AG04449 (cell line): ENCODE measurements at regions of chr19 and their contacts with region 1.

Region 1: DNA sequence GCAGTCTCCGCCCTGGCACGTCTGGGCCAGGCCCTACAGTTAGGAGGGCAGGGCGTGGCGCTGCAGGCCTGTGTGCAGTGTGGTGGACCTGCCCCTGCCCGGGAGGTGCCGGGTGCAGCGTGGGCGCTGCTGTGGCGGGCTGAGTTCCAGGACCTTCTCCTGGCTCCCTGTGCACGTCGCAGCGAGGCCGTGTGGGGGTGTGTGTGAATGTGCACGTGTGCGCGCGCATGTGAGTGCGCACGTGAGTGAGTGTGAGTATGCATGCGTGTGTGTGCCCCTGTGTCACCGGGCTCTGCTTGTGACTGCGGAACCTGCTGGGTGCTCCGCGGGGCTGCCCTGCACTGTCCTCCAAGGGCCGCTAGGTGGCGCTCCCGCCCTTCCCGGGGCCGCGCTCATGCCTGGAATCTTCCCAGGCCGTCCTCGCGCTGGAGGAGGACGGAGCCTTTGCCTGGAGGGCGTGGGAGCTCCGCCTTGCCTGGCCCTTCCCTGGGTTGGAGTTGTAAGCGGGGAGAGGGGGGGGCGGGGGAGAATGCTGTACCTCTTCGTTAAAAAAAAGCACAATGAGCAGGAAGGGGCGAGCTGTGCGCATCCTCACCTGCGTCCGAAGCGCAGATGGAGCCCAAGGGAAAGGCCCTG is 79.3 kb downstream of the KDM4B start:
- DNase-seq: no peak
- H3K4me3 ChIP-seq: no peak overlapping the region
- CTCF ChIP-seq: peak; percentile 100

Region 2: GRCh38 chr19:4980810-4981680 is 67.2 kb before region 1 on chr19:
- CTCF ChIA-PET with region 1: no interaction called
- POLR2A ChIA-PET with region 1: no interaction called
- DNase-seq: no peak
- H3K4me3 ChIP-seq: no peak overlapping the region
- CTCF ChIP-seq: no peak

Region 3: DNA sequence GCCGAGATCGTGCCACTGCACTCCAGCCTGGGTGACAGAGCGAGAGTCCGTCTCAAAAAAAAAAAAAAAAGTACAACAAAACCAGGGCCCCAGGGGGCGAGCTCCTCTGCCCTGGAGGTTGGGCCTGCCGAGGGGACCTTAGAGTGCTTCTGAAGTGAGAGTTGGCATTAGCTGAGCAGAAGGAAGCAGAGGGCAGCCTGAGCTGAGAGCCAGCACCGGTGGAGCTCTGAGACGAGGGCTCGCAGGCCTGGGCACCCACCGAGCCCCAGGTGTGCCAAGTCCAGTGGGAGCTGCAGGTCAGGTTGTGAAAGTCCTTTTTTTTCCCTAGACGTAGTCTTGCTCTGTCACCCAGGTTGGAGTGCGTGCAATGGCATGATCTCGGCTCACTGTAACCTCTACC is 33.3 kb before region 1 on chr19:
- CTCF ChIA-PET with region 1: no interaction called
- POLR2A ChIA-PET with region 1: no interaction called
- DNase-seq: no peak
- H3K4me3 ChIP-seq: no peak overlapping the region
- CTCF ChIP-seq: no peak

Region 4: DNA sequence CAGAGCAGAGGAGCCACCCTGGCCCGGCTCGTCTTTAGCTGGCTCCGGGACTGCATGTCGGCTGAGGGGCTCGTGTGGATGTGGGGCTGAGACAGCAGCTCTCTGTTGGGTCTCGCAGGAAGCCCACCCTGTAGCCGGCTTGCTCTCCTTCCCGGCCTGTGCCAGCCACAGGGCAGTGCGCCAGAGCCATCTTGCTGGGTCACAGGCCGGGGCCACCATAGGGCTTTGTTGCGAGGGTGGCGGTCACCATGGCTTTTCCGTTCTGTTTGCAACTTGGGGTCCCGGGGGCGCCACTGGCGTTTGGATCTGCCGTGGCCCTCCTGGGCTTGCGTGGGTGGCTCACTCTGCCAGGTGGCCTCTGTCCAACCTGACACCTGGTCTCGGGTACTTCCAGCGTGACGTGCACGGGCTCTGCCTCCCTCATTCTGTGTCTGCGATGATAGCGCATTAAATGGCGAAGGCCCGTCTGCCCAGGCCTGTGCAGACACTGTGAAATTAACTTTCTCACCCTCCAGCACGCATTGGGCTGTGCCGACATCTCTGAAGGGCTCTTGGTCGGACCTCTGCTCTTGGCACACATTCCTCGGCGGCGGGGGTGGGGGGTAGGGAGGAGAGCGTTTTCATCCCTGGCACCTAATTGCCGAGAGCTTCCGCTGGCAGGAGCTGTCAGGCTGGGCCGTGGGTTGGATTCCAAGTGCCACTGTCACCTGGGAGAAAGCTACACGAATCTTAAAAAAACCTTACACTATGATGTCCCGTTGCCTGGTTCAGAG is 15.8 kb after region 1 on chr19:
- CTCF ChIA-PET with region 1: interaction called, 31 read pairs
- POLR2A ChIA-PET with region 1: interaction called, 3 read pairs
- DNase-seq: no peak
- H3K4me3 ChIP-seq: no peak overlapping the region
- CTCF ChIP-seq: no peak

Region 5: DNA sequence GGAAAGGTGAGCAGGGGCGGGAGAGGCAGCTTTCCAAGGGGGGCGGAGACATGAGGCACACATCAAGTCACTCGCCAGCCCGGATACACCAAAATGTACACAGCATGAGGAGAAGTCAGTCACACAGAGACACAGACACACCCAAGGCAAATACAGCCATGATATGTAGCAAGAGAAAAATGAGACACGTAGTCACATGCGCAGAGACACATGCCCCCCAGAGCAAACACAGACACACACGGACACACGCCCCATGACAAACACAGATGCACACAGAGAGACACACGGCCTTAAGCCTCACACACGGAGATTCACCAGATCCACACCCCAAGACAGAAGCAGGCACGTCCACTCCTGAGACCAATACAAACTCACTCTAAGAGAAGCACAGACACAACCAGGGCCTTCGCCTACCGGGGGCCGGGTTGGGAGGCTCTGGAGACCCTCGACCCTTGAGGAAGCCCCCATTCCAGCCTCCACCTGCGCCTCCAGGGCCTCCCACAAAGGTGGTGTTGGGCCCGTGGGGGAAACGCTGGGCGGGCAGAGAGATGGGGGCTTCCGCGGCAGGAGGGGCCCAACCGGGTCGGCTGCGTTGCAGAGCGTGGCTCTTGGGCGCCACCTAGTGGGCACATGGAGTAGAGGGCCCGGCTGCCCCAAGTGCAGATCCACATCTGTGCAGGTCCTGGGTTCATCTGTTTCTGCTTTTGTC is 529.7 kb after region 1 on chr19:
- CTCF ChIA-PET with region 1: interaction called, 42 read pairs
- POLR2A ChIA-PET with region 1: no interaction called
- DNase-seq: no peak
- H3K4me3 ChIP-seq: peak overlapping the region; percentile 35
- CTCF ChIP-seq: peak; percentile 97